HepG2 (cell line): ENCODE measurements at regions of chr1 and their contacts with region 1.

Region 1: GRCh38 chr1:168439456-168440375 is 104.1 kb downstream of the XCL2 start:
- DNase-seq: peak; percentile 65
- ATAC-seq: peak; percentile 94
- H3K4me3 ChIP-seq: no peak overlapping the region
- H3K27ac ChIP-seq: no peak overlapping the region
- H3K4me1 ChIP-seq: peaks cover 7% of the 10 kb centered on the region; the same call in 1 of the 2 replicates
- H3K27me3 ChIP-seq: no peaks in the 10 kb centered on the region
- CTCF ChIP-seq: peak; percentile 93
- EP300 ChIP-seq: no peak
- POLR2A ChIP-seq: no peak
- RAD21 ChIP-seq: peak; percentile 86

Region 2: DNA sequence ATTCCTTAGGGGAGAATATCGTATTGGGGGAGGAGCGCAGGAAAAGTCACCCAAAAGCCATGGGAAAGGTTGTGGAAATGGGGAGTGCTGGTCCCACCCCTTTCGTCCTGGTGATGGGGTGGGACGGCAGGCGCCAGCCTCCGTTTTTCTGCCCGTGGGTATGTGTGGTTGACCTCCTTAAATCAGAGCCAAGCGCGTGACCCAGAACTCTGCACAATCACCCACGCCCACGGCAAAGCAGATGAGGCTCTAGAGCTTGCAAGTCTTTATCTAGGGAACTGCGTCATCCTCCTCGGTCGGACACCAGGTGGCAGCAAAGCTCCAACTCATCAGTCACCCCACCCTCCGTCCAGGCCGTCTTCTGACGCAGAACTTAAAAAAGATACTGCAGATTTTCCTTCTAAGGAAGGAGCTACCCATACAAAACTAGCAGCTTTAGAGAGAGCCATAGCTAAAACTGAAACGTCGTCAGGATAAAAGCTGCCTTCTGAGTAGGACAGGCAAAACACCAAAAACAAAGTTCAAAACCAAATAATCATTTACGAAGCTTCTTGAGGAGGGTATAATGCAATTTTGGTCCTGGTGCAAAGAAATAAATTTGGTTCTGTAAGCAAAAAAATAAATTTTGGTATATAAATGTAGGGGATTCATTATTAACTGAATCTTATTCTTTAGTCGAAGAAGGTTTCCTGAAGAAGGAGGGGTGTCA is 97.0 kb before region 1 on chr1:
- CTCF ChIA-PET with region 1: interaction called, 4 read pairs
- POLR2A ChIA-PET with region 1: no interaction called
- in situ Hi-C with region 1: no loop called
- intact Hi-C with region 1: loop called (anchors 1 kb)
- DNase-seq: peak; percentile 52
- ATAC-seq: peak; percentile 94
- H3K4me3 ChIP-seq: peak overlapping the region; percentile 31 to 62 (median 48); a peak in 5 of 6 replicates
- H3K27ac ChIP-seq: no peak overlapping the region
- H3K4me1 ChIP-seq: peaks cover 14% of the 10 kb centered on the region
- H3K27me3 ChIP-seq: no peaks in the 10 kb centered on the region; a peak in 1 of 5 replicates
- CTCF ChIP-seq: peak; percentile 94
- EP300 ChIP-seq: no peak
- POLR2A ChIP-seq: no peak
- RAD21 ChIP-seq: peak; percentile 81

Region 3: DNA sequence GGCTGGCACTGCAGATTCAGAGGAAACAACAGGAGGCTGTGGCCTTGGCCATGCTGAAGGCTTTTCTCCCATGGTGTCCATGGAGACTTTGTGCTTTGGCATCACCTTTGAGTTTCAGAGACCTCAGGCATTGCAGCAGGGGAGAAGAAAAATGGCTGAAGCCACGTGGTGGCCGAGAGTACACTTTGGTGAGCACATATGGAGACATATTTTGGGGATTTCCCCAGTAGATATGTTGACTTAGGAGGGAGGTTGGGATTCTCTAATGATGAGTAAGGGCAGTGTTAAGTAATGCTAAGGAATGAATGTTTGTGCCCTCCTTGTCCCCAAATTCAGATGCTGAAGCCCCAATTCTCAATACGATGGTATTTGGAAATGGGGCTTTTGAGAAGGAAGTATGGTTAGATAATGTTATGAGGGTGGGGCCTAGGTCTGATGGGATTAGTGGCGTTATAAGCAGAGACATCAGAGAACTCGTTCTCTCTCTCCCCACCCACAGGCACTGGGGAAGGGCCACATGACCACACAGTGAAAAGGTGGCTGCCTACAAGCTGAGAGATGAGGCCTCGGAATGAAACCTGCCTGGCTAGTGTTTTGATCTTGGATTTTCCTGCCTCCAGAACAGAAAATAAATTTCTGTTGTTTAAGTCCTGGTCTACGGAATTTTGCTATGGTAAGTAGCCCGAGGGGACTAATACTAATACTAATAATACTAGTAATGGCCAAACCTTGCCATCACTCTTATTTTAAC is 60.4 kb before region 1 on chr1:
- CTCF ChIA-PET with region 1: no interaction called
- POLR2A ChIA-PET with region 1: no interaction called
- in situ Hi-C with region 1: no loop called
- intact Hi-C with region 1: no loop called
- DNase-seq: no peak
- ATAC-seq: no peak
- H3K4me3 ChIP-seq: no peak overlapping the region
- H3K27ac ChIP-seq: no peak overlapping the region
- H3K4me1 ChIP-seq: no peaks in the 10 kb centered on the region
- H3K27me3 ChIP-seq: no peaks in the 10 kb centered on the region
- CTCF ChIP-seq: no peak
- EP300 ChIP-seq: no peak
- POLR2A ChIP-seq: no peak
- RAD21 ChIP-seq: no peak

Region 4: GRCh38 chr1:168509875-168510791 is 70.4 kb after region 1 on chr1:
- CTCF ChIA-PET with region 1: no interaction called
- POLR2A ChIA-PET with region 1: no interaction called
- in situ Hi-C with region 1: no loop called
- intact Hi-C with region 1: no loop called
- DNase-seq: no peak
- ATAC-seq: peak; percentile 31; the same call in 2 of the 3 replicates
- H3K4me3 ChIP-seq: no peak overlapping the region
- H3K27ac ChIP-seq: no peak overlapping the region
- H3K4me1 ChIP-seq: peaks cover 34% of the 10 kb centered on the region
- H3K27me3 ChIP-seq: no peaks in the 10 kb centered on the region
- CTCF ChIP-seq: no peak
- EP300 ChIP-seq: no peak
- POLR2A ChIP-seq: no peak
- RAD21 ChIP-seq: no peak

Region 5: DNA sequence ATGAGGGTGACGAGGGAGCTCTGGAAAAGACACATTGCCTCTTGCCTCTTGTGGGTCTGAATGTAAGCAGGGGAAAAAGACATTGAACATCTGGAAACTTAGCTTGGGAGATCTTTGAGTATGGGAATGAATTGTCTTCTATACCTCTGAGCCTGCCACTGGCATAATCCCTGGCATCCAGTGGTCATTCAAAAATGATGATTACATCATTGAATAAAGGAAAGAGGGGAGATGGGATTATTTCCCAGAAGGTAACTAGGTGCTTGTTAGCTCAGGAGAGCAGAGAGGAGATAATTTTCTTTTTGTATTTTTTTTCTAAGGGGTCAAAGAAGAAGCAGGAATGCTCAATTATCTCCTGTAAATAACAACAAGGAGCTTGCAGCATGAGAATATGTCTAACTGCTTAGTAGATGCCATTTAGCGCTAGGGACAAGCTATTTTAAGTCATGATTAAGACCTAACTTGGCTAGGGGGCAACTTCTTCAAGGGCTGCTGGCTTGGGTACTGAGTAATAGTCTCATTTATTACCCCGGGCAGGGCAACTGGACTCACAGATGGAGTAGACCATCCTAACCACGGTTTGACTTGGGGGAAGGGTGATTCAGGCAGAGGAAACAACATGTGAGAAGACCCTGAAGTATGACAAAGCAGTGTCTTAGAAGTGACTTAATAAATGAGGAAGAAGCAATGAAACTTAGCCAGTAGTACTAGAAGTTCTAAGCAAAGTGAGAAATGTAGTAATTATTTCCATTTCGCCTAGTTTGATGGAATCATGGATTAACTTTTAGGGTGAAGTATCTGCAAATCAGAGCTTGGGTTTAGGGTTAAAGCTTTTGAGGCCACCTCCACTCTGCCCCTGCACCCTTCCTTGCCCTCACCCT is 115.1 kb after region 1 on chr1:
- CTCF ChIA-PET with region 1: no interaction called
- POLR2A ChIA-PET with region 1: no interaction called
- in situ Hi-C with region 1: no loop called
- intact Hi-C with region 1: loop called (anchors 5 kb)
- DNase-seq: no peak
- ATAC-seq: no peak
- H3K4me3 ChIP-seq: no peak overlapping the region
- H3K27ac ChIP-seq: peak overlapping the region; percentile 74
- H3K4me1 ChIP-seq: peaks cover 79% of the 10 kb centered on the region
- H3K27me3 ChIP-seq: no peaks in the 10 kb centered on the region
- CTCF ChIP-seq: no peak
- EP300 ChIP-seq: no peak
- POLR2A ChIP-seq: no peak
- RAD21 ChIP-seq: no peak

Region 6: GRCh38 chr1:168567007-168567406 is 127.3 kb after region 1 on chr1:
- CTCF ChIA-PET with region 1: no interaction called
- POLR2A ChIA-PET with region 1: no interaction called
- in situ Hi-C with region 1: loop called (anchors 5 kb)
- intact Hi-C with region 1: no loop called
- DNase-seq: no peak
- ATAC-seq: no peak
- H3K4me3 ChIP-seq: no peak overlapping the region
- H3K27ac ChIP-seq: no peak overlapping the region
- H3K4me1 ChIP-seq: peaks cover 16% of the 10 kb centered on the region; the same call in 1 of the 2 replicates
- H3K27me3 ChIP-seq: no peaks in the 10 kb centered on the region
- CTCF ChIP-seq: no peak
- EP300 ChIP-seq: no peak
- POLR2A ChIP-seq: no peak
- RAD21 ChIP-seq: no peak

Region 7: DNA sequence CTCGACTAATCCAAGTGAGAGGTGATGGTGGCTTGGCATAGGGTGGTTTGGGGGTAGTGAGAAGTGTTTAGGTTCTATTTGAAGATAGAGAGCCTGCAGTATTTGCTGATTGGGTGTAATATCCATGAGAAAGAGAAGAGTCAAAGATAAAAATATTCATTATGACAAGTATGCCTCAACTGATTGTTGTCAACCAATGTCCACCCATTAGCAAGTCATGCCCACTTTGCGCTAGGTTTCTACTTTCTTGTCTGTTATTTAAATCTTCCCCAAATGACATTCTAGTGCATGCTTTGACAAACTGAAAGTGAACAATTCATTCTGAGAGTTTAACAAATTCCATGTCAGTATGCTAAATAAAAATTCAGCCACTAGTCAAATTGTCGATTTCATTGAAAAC is 132.9 kb after region 1 on chr1:
- CTCF ChIA-PET with region 1: interaction called, 8 read pairs
- POLR2A ChIA-PET with region 1: no interaction called
- in situ Hi-C with region 1: loop called (anchors 5 kb)
- intact Hi-C with region 1: loop called (anchors 1 kb)
- DNase-seq: no peak
- ATAC-seq: no peak
- H3K4me3 ChIP-seq: no peak overlapping the region
- H3K27ac ChIP-seq: no peak overlapping the region
- H3K4me1 ChIP-seq: peaks cover 16% of the 10 kb centered on the region; the same call in 1 of the 2 replicates
- H3K27me3 ChIP-seq: no peaks in the 10 kb centered on the region
- CTCF ChIP-seq: no peak
- EP300 ChIP-seq: no peak
- POLR2A ChIP-seq: no peak
- RAD21 ChIP-seq: no peak